Activated CD4-positive, alpha-beta T cell treated with anti-CD3 and anti-CD28 coated beads, Interleukin-2, amount 10 ng/mL, durations not matched to agents 7 days and 5 days (primary cell): ENCODE measurements at regions of chr9 and their contacts with region 1.

Region 1: GRCh38 chr9:32550562-32551433 is 1.3 kb upstream of the SMIM27 start:
- DNase-seq: peak; percentile 96
- H3K4me3 Mint-ChIP-seq: peak overlapping the region; percentile 94
- H3K27ac Mint-ChIP-seq: peak overlapping the region; percentile 100
- H3K4me1 Mint-ChIP-seq: peaks cover 33% of the 10 kb centered on the region
- H3K27me3 Mint-ChIP-seq: no peaks in the 10 kb centered on the region

Region 2: GRCh38 chr9:32566770-32567169 is 16.0 kb after region 1 on chr9:
- CTCF ChIA-PET with region 1: interaction called, 25 read pairs
- POLR2A ChIA-PET with region 1: interaction called, 3 read pairs
- DNase-seq: no peak
- H3K4me3 Mint-ChIP-seq: no peak overlapping the region
- H3K27ac Mint-ChIP-seq: no peak overlapping the region
- H3K4me1 Mint-ChIP-seq: peaks cover 23% of the 10 kb centered on the region
- H3K27me3 Mint-ChIP-seq: no peaks in the 10 kb centered on the region